Endothelial cell of umbilical vein (primary cell): ENCODE measurements at regions of chr20 and their contacts with region 1.

Region 1: DNA sequence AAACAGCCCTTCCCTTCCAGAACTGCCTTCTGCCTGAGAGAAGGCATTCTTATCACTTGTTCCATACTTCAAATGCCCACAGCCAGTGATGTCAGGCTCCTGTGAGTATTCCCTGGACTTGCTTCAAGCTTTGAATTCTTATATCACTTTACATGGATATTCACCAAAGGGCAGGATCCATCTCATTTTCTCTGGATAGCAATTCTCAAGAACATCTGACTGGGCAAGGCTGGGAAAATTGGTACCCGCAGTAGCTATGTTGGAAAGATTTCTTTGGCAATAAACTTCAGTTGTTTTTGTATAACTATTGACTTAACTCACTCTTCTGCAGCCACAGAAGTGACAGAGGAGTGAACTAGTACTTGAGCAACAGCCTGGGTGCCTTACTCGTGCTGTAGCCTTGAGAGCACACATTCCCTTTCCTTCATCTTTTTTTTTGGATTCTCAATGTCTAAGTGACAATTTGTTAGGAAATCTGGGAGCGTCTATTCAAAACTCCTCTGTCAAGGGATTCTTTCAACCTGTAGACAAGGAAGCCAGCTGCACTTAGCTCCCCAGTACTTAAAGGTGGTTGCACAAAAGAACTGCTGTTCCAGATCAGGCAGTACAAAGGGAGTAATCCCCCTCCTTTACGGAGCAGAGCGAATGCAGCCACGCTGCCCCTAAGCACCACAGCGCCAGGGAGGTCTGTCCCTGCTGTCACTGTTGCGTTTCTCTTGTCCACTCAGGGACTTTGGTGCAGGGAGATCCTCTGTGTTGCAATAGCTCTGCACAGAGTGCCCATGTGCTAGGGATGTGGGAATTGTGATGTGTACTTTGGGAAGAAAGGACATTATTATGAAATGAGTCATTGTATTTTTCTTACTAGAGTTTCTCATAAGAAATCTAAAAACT is 69.6 kb downstream of the JAG1 start:
- DNase-seq: peak; percentile 89
- H3K4me3 ChIP-seq: no peak overlapping the region
- H3K27ac ChIP-seq: peak overlapping the region; percentile 41
- H3K4me1 ChIP-seq: peaks cover 16% of the 10 kb centered on the region
- H3K27me3 ChIP-seq: no peaks in the 10 kb centered on the region
- CTCF ChIP-seq: no peak
- POLR2A ChIP-seq: no peak

Region 2: DNA sequence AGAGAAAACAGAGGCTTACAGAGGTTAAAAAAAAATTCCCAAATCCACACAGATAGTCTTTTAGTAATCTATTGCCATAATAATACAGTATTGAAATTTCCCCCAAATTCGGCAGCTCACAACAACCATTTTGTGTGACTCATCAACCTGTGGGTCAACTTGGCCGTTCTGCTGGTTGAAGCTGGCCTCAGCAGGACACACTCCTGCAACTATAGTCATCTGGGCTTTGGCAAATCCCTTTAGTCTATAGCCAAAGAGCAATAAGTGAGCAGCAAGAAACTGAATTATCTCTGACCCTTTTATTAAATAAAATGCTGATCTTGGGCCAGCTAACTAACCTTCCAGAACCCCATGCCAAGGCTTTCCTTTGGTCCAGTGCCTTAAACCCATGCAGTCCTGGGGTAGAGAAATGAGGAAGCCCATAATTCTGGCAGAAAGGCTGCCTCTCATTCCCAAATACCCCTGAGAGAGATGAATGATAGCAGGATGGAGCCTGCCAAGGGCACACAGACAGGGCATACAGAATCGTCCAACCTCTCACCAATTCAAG is 402.8 kb before region 1 on chr20:
- CTCF ChIA-PET with region 1: no interaction called
- POLR2A ChIA-PET with region 1: no interaction called
- dilution Hi-C with region 1: no loop called
- intact Hi-C with region 1: no loop called
- DNase-seq: no peak
- H3K4me3 ChIP-seq: no peak overlapping the region
- H3K27ac ChIP-seq: no peak overlapping the region
- H3K4me1 ChIP-seq: no peaks in the 10 kb centered on the region
- H3K27me3 ChIP-seq: no peaks in the 10 kb centered on the region
- CTCF ChIP-seq: no peak
- POLR2A ChIP-seq: no peak

Region 3: DNA sequence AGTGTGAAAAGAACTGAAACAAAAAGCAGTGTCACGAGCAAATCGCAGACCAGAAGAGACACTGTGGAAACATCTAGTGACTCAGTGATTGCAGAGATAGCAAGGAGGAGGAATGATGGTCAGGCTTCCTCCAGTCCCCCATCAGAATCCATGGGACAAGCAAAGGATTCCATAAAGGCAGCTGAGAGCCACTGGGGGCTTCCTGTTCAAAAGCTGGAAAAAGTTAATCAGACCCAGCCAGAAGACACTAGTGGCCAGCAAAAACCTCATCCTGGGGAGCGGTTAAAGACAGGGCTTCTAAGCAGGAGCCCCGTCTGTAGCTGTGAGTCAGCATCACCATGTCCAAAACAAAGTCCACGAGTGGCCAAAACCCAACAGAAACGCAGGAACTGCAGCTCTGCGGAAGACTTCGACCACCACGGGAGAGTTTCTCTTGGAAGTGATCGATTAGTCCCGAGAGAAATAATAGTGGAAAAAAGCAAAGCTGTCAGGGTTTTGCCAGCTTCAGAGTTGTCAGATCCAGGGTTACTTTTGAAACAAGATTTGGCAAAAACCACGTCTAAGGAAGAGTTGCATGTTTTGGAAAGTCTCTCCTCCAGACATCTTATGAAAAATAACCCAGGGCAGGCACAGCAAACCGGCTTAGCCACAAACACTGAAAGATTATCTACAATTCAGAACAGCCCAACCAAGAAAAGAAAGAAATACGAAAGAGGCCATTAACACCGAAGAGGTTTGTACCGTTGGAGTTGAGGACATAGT is 18.6 kb after region 1 on chr20:
- CTCF ChIA-PET with region 1: interaction called, 6 read pairs
- POLR2A ChIA-PET with region 1: no interaction called
- dilution Hi-C with region 1: no loop called
- intact Hi-C with region 1: loop called (anchors 1 kb)
- DNase-seq: peak; percentile 78
- H3K4me3 ChIP-seq: peak overlapping the region in 2 of 3 experiments; percentile 2 to 20
- H3K27ac ChIP-seq: peak overlapping the region; percentile 40
- H3K4me1 ChIP-seq: peaks cover 30% of the 10 kb centered on the region
- H3K27me3 ChIP-seq: no peaks in the 10 kb centered on the region
- CTCF ChIP-seq: no peak
- POLR2A ChIP-seq: no peak

Region 4: GRCh38 chr20:10636326-10636818 is 32.2 kb after region 1 on chr20:
- CTCF ChIA-PET with region 1: interaction called, 4 read pairs
- POLR2A ChIA-PET with region 1: no interaction called
- dilution Hi-C with region 1: no loop called
- intact Hi-C with region 1: loop called (anchors 2 kb)
- DNase-seq: peak; percentile 73
- H3K4me3 ChIP-seq: no peak overlapping the region
- H3K27ac ChIP-seq: no peak overlapping the region
- H3K4me1 ChIP-seq: peaks cover 38% of the 10 kb centered on the region
- H3K27me3 ChIP-seq: no peaks in the 10 kb centered on the region
- CTCF ChIP-seq: no peak
- POLR2A ChIP-seq: no peak